ENCODE measurements at regions of chr17 and their contacts with region 1.

Region 1: GRCh38 chr17:28726226-28727130 is at the start of gene TLCD1:
- DNase-seq: peak; percentile 97
- H3K4me3 Mint-ChIP-seq: peak within 1 kb of the TSS; percentile 91
- H3K27ac Mint-ChIP-seq: peak within 1 kb of the TSS; percentile 99
- H3K4me1 Mint-ChIP-seq: peaks cover 27% of the 10 kb centered on the region
- H3K27me3 Mint-ChIP-seq: no peaks in the 10 kb centered on the region
- CTCF ChIP-seq: peak; percentile 99
- total RNA-seq, gene TLCD1: 13.4 and 18.7 TPM in 2 replicates

Region 2: GRCh38 chr17:28743225-28744103 is 17.0 kb after region 1 on chr17 and contains the start of gene TRAF4:
- CTCF ChIA-PET with region 1: interaction called, 365 read pairs
- POLR2A ChIA-PET with region 1: interaction called, 1,135 read pairs
- intact Hi-C with region 1: loop called (anchors 1 kb)
- DNase-seq: peak; percentile 97
- H3K4me3 Mint-ChIP-seq: peak within 1 kb of the TSS; percentile 91
- H3K27ac Mint-ChIP-seq: peak within 1 kb of the TSS; percentile 93
- H3K4me1 Mint-ChIP-seq: peaks cover 13% of the 10 kb centered on the region
- H3K27me3 Mint-ChIP-seq: no peaks in the 10 kb centered on the region
- CTCF ChIP-seq: no peak
- total RNA-seq, gene TRAF4: 106 and 126 TPM in 2 replicates

Region 3: DNA sequence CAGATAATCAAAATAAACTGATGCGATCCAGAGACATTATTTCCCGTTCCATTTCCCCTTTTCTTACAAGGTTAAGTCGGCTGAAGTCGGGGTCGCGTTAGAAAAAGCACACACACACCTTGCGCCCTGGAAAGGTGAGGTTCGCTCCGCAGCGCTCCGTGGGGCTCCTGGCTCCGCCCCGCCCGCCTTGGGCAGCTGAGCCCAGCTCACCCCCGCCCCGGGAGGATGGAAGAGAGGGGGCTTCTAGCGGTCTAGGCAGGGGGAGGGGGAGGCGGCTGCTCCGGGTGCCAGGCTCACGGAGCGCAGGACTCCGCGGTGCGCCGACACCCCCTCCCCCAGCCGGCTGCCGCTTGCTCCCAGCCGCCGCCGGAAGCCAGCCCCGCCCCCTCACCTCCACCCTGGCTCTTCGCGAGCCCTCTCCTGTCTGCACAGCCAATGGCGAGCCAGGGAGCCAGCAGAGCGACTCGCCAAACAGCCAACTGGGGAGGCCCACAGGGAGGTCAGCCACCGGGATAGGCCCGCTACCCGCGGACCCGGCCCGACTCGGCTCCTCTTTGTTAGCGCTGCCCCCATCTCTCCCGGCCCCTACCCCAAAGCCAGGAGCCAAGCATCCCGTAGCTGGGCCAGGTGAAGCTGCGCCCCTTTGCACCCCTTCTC is 85.7 kb after region 1 on chr17:
- CTCF ChIA-PET with region 1: interaction called, 4 read pairs
- POLR2A ChIA-PET with region 1: interaction called, 34 read pairs
- intact Hi-C with region 1: no loop called
- DNase-seq: peak; percentile 97
- H3K4me3 Mint-ChIP-seq: peak overlapping the region; percentile 90
- H3K27ac Mint-ChIP-seq: peak overlapping the region; percentile 98
- H3K4me1 Mint-ChIP-seq: peaks cover 28% of the 10 kb centered on the region
- H3K27me3 Mint-ChIP-seq: no peaks in the 10 kb centered on the region
- CTCF ChIP-seq: no peak

Region 4: DNA sequence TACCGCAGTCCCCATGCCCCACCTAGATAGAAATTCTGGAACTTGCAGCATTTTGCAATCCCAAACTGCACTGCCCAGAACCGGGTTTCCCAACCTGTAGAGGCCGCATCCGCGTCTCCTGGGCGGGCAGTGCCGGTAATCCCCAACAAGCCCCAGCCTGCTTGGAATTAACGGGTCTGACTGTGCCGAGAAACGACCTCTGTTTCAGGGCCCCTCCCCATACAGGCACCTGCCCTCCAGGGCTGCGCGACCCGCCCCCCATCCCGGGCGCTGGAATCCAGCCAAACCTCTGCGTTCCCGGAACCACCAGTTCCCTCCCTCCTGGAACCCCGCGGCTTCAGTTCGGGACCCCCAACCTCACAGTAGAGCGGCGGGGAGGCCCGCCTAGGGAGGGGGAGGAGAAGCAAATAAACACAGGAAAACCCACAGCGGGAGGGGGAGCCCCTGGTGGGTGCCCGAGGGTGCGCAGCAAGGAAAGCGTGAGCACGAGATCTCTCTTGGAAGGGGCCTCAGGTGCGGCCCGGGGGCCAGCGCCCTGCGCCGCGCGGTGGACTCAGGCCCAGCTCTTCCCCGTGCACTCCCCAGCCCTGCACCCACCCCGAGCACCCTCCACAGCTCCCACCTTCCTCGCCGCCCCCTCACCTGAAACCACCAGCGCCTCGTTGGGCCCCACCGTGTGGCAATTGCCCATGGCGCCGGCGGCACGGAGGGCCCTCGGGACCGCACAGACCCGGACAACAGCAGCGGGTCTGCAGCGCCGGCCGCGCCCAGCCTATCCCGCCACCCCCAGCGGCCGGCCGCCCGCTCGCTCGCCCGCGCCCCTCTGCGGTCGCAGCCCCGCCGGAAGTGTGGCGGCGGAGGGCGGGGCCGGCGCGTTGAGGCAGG is 170.6 kb after region 1 on chr17 and contains the start of gene FLOT2:
- CTCF ChIA-PET with region 1: interaction called, 18 read pairs
- POLR2A ChIA-PET with region 1: interaction called, 64 read pairs
- intact Hi-C with region 1: loop called (anchors 2 kb)
- DNase-seq: peak; percentile 96
- H3K4me3 Mint-ChIP-seq: peak within 1 kb of the TSS; percentile 90
- H3K27ac Mint-ChIP-seq: peak within 1 kb of the TSS; percentile 93
- H3K4me1 Mint-ChIP-seq: peaks cover 26% of the 10 kb centered on the region
- H3K27me3 Mint-ChIP-seq: no peaks in the 10 kb centered on the region
- CTCF ChIP-seq: peak; percentile 5
- total RNA-seq, gene FLOT2: 98.5 and 126 TPM in 2 replicates

Region 5: DNA sequence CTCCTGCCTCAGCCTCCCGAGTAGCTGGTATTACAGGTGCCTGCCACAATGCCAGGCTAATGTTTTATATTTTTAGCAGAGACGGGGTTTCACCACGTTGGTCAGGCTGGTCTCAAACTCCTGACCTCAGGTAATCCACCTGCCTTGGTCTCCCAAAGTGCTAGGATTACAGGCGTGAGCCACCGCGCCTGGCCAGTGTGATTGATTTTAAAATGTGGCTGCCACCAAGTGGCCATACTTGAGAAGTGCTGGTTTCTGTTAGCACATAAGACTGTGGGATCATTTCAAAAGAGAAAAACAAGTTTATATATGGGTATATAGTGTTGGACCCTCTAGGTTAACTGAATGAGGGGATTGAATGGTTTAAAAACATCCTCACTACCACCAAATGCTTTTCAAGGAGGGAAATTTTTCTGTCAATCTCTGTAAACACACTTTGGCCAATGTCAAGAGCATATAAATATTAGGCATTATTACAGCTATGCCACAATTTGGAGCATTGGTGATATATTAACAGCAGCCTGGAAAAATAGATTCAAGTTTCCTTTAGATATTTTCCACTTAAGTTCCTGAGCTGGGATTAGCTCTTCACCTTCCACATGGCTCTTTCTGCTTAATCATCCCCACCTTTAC is 189.9 kb after region 1 on chr17:
- CTCF ChIA-PET with region 1: interaction called, 11 read pairs
- POLR2A ChIA-PET with region 1: interaction called, 4 read pairs
- intact Hi-C with region 1: no loop called
- DNase-seq: no peak
- H3K4me3 Mint-ChIP-seq: no peak overlapping the region
- H3K27ac Mint-ChIP-seq: no peak overlapping the region
- H3K4me1 Mint-ChIP-seq: peaks cover 9% of the 10 kb centered on the region
- H3K27me3 Mint-ChIP-seq: no peaks in the 10 kb centered on the region
- CTCF ChIP-seq: peak; percentile 53

Measured in MCF 10A (cell line).